Aorta (tissue), 5 donors: ENCODE measurements at regions of chr1 and their contacts with region 1.

Region 1: DNA sequence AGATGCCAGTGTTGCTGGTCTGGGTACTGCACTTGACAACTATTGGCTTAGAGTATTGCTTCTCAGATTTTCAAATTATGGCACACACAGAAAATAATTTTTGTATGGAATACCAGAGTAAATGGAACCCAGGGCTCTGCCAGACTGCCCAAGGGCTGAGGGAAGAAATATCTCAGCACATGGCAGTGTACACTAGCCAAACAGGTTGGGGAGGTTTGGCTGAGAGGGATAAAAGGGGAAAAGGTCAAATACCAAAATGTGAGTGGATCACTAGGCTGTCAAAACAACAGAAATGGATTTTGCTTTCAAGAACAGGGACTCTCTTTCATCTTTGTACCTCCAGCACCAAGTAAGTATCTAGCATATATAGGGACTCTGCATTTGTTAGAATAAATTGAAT is 3.0 kb upstream of the RGS8 start:
- DNase-seq: no peak
- ATAC-seq: no peak
- H3K4me3 ChIP-seq: no peak overlapping the region
- H3K27ac ChIP-seq: no peak overlapping the region
- H3K4me1 ChIP-seq: no peaks in the 10 kb centered on the region
- H3K27me3 ChIP-seq: no peaks in the 10 kb centered on the region

Region 2: GRCh38 chr1:182649041-182649440 is 38.3 kb before region 1 on chr1:
- intact Hi-C with region 1: loop called in 1 of 2 experiments (anchors 5 kb)
- DNase-seq: no peak
- ATAC-seq: no peak
- H3K4me3 ChIP-seq: no peak overlapping the region
- H3K27ac ChIP-seq: no peak overlapping the region
- H3K4me1 ChIP-seq: no peaks in the 10 kb centered on the region
- H3K27me3 ChIP-seq: no peaks in the 10 kb centered on the region